ENCODE measurements at regions of chr19 and their contacts with region 1.

Region 1: GRCh38 chr19:17235618-17236377 is 9.8 kb downstream of the OCEL1 start:
- DNase-seq: no peak
- ATAC-seq: peak; percentile 65
- H3K4me3 ChIP-seq: peak overlapping the region; percentile 91 to 93
- H3K27ac ChIP-seq: peak overlapping the region; percentile 100
- H3K4me1 ChIP-seq: peaks cover 13 to 27% of the 10 kb centered on the region in 2 experiments
- H3K27me3 ChIP-seq: no peaks in the 10 kb centered on the region
- CTCF ChIP-seq: peak in 1 of 3 experiments; percentile 21; a peak in 1 of 6 replicates
- POLR2A ChIP-seq: peak; percentile 29
- RAD21 ChIP-seq: no peak

Region 2: GRCh38 chr19:17215125-17215971 is 20.4 kb before region 1 on chr19 and contains the start of gene USE1:
- CTCF ChIA-PET with region 1: no interaction called
- POLR2A ChIA-PET with region 1: interaction called, 12 read pairs
- RAD21 ChIA-PET with region 1: no interaction called
- intact Hi-C with region 1: no loop called
- DNase-seq: peak; percentile 84
- ATAC-seq: peak; percentile 89
- H3K4me3 ChIP-seq: peak within 1 kb of the TSS; percentile 57 to 70
- H3K27ac ChIP-seq: peak within 1 kb of the TSS; percentile 89
- H3K4me1 ChIP-seq: peaks cover 9 to 30% of the 10 kb centered on the region in 2 experiments
- H3K27me3 ChIP-seq: no peaks in the 10 kb centered on the region
- CTCF ChIP-seq: no peak
- POLR2A ChIP-seq: peak; percentile 61
- RAD21 ChIP-seq: no peak
- total RNA-seq, gene USE1: 27.5 TPM

Region 3: GRCh38 chr19:17311455-17312248 is 75.9 kb after region 1 on chr19:
- CTCF ChIA-PET with region 1: no interaction called
- POLR2A ChIA-PET with region 1: no interaction called
- RAD21 ChIA-PET with region 1: no interaction called
- intact Hi-C with region 1: no loop called
- DNase-seq: no peak
- ATAC-seq: peak; percentile 41
- H3K4me3 ChIP-seq: peak overlapping the region; percentile 24 to 43
- H3K27ac ChIP-seq: peak overlapping the region; percentile 77
- H3K4me1 ChIP-seq: peaks cover 36 to 56% of the 10 kb centered on the region in 2 experiments
- H3K27me3 ChIP-seq: no peaks in the 10 kb centered on the region
- CTCF ChIP-seq: no peak
- POLR2A ChIP-seq: no peak
- RAD21 ChIP-seq: no peak

Region 4: GRCh38 chr19:17576759-17577473 is 341.1 kb after region 1 on chr19:
- CTCF ChIA-PET with region 1: no interaction called
- POLR2A ChIA-PET with region 1: no interaction called
- RAD21 ChIA-PET with region 1: no interaction called
- intact Hi-C with region 1: no loop called
- DNase-seq: peak; percentile 87
- ATAC-seq: peak; percentile 83
- H3K4me3 ChIP-seq: no peak overlapping the region
- H3K27ac ChIP-seq: peak overlapping the region; percentile 47; the same call in 1 of the 2 replicates
- H3K4me1 ChIP-seq: peaks cover 16 to 41% of the 10 kb centered on the region in 2 experiments; a peak in 3 of 4 replicates
- H3K27me3 ChIP-seq: no peaks in the 10 kb centered on the region
- CTCF ChIP-seq: no peak
- POLR2A ChIP-seq: no peak
- RAD21 ChIP-seq: no peak